ENCODE measurements at regions of chr2 and their contacts with region 1.

Region 1: GRCh38 chr2:231227309-231228162 is 29.1 kb downstream of the ARMC9 start:
- DNase-seq: peak; percentile 82 to 91 (median 90)
- H3K4me3 ChIP-seq: no peak overlapping the region
- H3K27ac ChIP-seq: no peak overlapping the region
- H3K4me1 ChIP-seq: peaks cover 0 to 26% (median 22%) of the 10 kb centered on the region in 4 experiments
- H3K27me3 ChIP-seq: no peaks in the 10 kb centered on the region

Region 2: DNA sequence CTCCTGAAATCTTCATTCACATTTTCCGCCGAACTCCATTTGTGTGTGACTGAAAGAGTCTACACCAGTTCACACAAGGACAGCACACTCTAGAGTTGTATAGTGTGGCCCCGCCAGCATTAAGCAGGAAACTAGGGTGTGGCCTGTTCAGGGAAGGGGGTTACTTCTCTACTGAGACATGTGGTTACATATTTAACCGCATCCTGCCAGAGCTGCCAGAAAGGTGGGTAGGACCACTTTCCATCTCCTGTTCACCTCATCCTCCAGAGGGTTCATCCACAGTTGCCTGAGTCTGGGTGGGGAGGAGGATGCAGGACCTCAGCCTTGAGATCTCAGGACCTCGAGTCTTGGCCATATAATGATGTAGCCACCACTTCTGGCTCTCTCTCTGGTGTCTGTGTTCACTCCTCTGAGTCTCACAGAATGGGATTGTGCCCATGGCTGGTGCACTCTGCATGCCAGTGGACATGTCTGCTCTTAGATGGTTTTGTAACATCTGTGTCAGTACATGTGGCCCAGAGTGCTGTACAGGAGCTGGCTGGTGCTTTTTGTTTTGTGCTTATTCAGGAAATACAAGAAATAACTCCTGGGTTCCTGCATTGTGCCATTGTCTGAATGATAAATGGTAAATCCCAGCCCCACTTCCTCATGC is 908.2 kb before region 1 on chr2:
- CTCF ChIA-PET with region 1: no interaction called
- POLR2A ChIA-PET with region 1: no interaction called
- DNase-seq: peak; percentile 34 to 90 (median 84)
- H3K4me3 ChIP-seq: peak overlapping the region in 1 of 7 experiments; percentile 34
- H3K27ac ChIP-seq: no peak overlapping the region
- H3K4me1 ChIP-seq: peaks cover 11 to 20% (median 19%) of the 10 kb centered on the region in 4 experiments
- H3K27me3 ChIP-seq: no peaks in the 10 kb centered on the region

Region 3: GRCh38 chr2:231104115-231104713 is 123.3 kb before region 1 on chr2:
- CTCF ChIA-PET with region 1: interaction called, 20 read pairs
- POLR2A ChIA-PET with region 1: no interaction called
- DNase-seq: peak; percentile 69 to 86 (median 80)
- H3K4me3 ChIP-seq: no peak overlapping the region
- H3K27ac ChIP-seq: no peak overlapping the region
- H3K4me1 ChIP-seq: no peaks in the 10 kb centered on the region
- H3K27me3 ChIP-seq: no peaks in the 10 kb centered on the region

Region 4: GRCh38 chr2:231238689-231239088 is 11.2 kb after region 1 on chr2:
- CTCF ChIA-PET with region 1: interaction called, 27 read pairs
- POLR2A ChIA-PET with region 1: no interaction called
- DNase-seq: peak in 1 of 3 donors; percentile 20
- H3K4me3 ChIP-seq: no peak overlapping the region
- H3K27ac ChIP-seq: no peak overlapping the region
- H3K4me1 ChIP-seq: peaks cover 0 to 9% (median 4%) of the 10 kb centered on the region in 4 experiments
- H3K27me3 ChIP-seq: no peaks in the 10 kb centered on the region

Region 5: DNA sequence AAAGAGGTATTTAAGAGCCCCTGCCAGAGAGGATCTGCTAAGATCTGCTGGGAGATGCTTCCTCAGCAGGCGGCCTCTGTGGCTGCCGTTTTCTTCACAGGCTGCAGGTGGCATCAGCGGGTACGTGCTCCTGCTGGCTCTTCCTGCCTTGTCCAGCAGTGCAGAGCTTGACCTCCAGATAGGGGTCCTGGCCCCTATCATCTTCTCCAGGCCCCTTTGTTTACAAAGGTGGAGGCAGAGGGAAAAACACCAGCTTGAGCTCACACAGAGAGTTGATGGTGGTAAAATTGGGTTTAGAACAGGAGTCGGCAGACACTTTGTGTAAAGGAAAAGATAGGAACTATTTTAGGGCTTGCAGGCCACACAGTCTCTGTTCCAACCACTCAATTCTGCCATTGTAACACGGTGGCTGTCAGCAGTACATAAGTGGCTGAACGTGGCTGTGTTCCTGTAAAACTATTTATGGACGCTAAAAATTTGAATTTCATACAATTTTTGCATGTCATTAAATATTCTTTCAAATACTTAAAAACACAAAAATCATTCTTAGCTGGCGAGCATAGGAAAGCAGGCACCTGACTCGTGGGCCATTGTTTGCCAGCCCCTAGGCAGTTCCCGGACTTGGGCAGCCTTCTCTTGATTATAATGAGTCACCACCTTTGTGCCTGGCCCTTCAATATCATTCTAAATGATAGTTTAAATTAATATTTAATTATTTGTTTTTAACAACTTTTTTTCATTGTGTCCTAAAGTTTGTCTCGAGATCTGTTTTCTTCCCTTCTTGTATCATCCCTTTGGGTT is 69.8 kb after region 1 on chr2:
- CTCF ChIA-PET with region 1: interaction called, 22 read pairs
- POLR2A ChIA-PET with region 1: no interaction called
- DNase-seq: peak in 2 of 3 donors; percentile 48
- H3K4me3 ChIP-seq: no peak overlapping the region
- H3K27ac ChIP-seq: no peak overlapping the region
- H3K4me1 ChIP-seq: peaks cover 10 to 44% (median 28%) of the 10 kb centered on the region in 4 experiments
- H3K27me3 ChIP-seq: no peaks in the 10 kb centered on the region

Region 6: GRCh38 chr2:231394211-231395141 is 166.9 kb after region 1 on chr2:
- CTCF ChIA-PET with region 1: interaction called, 234 read pairs
- POLR2A ChIA-PET with region 1: interaction called, 3 read pairs
- DNase-seq: no peak
- H3K4me3 ChIP-seq: peak overlapping the region in 1 of 7 experiments; percentile 4
- H3K27ac ChIP-seq: peak overlapping the region in 1 of 2 experiments; percentile 15
- H3K4me1 ChIP-seq: peaks cover 6 to 47% (median 41%) of the 10 kb centered on the region in 4 experiments
- H3K27me3 ChIP-seq: peaks cover 0 to 19% (median 6%) of the 10 kb centered on the region in 5 experiments

Region 7: DNA sequence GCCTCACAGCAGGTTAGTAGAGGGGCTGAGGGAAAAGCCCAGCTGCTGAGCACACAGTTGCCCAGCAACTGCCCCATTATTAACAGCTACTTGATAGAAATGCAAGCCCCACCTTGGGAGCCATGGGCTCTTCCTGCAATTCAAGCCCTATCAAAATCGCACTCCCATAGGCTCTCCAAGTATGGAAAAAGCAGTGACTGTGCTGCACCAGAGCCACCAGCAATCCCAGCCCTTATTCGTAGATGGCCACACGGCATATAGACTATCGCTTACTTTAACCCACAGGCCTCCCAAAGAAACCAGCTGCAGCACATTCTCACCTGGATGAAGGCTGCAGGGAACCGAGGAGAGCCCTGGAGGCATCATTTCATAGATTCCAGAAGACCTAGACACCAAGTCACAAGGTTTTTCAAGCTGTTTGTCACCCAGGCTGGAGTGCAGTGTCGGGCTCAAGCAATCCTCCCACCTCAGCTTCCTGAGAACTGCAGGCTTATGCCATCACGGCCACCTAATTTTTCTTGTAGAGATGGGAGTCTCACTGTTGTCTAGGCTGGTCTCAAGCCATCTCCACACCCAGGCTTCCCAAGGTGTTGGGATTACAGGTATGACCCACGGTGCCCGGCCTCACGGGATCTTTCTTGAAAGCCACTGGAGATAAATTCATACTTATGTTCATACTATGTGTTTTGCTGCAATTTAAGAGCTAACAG is 225.4 kb after region 1 on chr2:
- CTCF ChIA-PET with region 1: interaction called, 44 read pairs
- POLR2A ChIA-PET with region 1: interaction called, 5 read pairs
- DNase-seq: peak in 2 of 3 donors; percentile 20 to 24
- H3K4me3 ChIP-seq: no peak overlapping the region
- H3K27ac ChIP-seq: no peak overlapping the region
- H3K4me1 ChIP-seq: peaks cover 0 to 2% (median 0%) of the 10 kb centered on the region in 4 experiments
- H3K27me3 ChIP-seq: no peaks in the 10 kb centered on the region

Measured in common myeloid progenitor, CD34-positive (primary cell).